ENCODE measurements at regions of chr6 and their contacts with region 1.

Region 1: DNA sequence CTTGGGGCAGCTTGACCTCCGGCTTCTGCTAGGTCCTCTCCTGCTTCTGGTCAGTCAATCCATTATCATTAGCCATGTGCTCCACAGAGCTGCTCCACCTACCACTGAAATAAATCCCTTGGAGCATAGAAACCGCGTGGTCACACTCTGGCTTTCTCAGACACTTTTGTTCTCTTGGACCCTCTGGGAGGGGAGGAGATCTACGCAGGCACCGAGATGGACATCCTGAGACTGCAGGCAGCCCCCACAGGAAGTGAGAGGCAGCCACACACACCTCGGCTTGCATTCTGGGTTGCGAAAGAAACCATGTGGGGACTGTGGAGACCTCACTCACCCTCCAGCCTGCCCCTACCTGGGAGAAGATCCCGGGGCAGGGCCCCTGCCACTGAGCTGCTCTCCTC is 79.5 kb downstream of the FYN start:
- DNase-seq: no peak
- H3K4me3 Mint-ChIP-seq: peak overlapping the region; percentile 63
- H3K27ac Mint-ChIP-seq: peak overlapping the region; percentile 94
- H3K4me1 Mint-ChIP-seq: peaks cover 71% of the 10 kb centered on the region
- H3K27me3 Mint-ChIP-seq: no peaks in the 10 kb centered on the region

Region 2: GRCh38 chr6:111777357-111777756 is 16.4 kb before region 1 on chr6:
- intact Hi-C with region 1: loop called (anchors 1 kb)
- DNase-seq: no peak
- H3K4me3 Mint-ChIP-seq: peak overlapping the region; percentile 2
- H3K27ac Mint-ChIP-seq: peak overlapping the region; percentile 66
- H3K4me1 Mint-ChIP-seq: peaks cover 71% of the 10 kb centered on the region
- H3K27me3 Mint-ChIP-seq: no peaks in the 10 kb centered on the region

Region 3: DNA sequence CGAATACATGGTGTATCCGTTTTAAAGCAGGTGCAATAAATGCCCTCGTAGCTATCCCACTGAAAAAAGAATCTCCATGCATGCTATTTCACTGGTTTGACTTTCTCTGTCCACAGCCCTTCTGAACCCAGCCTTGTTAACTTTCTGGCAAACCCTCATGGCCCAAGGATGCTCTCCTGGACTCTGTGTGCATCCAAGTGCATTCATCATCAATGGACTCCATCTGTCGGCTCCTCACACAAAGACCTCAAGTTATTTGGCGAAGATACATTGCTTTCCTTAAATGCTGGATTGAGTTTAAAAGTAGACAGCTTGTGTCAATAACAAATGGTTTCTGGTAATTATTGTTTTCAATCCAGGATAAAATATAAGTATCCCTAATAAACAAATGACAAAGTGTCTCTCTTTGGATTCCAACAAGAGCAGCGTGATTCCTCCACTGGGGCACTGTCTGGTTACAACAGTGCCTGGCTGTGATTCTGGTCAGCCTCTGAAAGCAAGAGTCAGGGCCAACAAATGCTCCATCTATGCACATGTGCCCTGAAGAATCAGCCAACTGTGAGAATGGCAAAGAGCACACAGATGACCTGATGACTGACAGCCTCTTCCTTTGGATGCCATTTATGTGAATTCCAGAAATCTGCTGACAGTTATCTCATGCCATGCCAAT is 23.9 kb after region 1 on chr6:
- intact Hi-C with region 1: no loop called
- DNase-seq: no peak
- H3K4me3 Mint-ChIP-seq: no peak overlapping the region
- H3K27ac Mint-ChIP-seq: peak overlapping the region; percentile 69
- H3K4me1 Mint-ChIP-seq: peaks cover 56% of the 10 kb centered on the region
- H3K27me3 Mint-ChIP-seq: no peaks in the 10 kb centered on the region

Measured in activated T-helper 2 cell treated with anti-CD3 and anti-CD28 coated beads, Interferon-gamma antibody, Interleukin-2, Interleukin-4, amounts not matched to agents 10 μg/mL and 5 μg/mL and 100 μg/mL, durations not matched to agents 14 hours and 24 hours and 36 hours (primary cell).